Activated CD4-positive, alpha-beta memory T cell treated with anti-CD3 and anti-CD28 coated beads, Interleukin-2, amount 10 ng/mL, durations not matched to agents 7 days and 5 days (primary cell): ENCODE measurements at regions of chr10 and their contacts with region 1.

Region 1: GRCh38 chr10:96830511-96831199 is 1.4 kb upstream of the LCOR start:
- DNase-seq: peak; percentile 85
- H3K4me3 Mint-ChIP-seq: peak overlapping the region; percentile 66
- H3K27ac Mint-ChIP-seq: peak overlapping the region; percentile 81
- H3K4me1 Mint-ChIP-seq: peaks cover 38% of the 10 kb centered on the region
- H3K27me3 Mint-ChIP-seq: no peaks in the 10 kb centered on the region

Region 2: DNA sequence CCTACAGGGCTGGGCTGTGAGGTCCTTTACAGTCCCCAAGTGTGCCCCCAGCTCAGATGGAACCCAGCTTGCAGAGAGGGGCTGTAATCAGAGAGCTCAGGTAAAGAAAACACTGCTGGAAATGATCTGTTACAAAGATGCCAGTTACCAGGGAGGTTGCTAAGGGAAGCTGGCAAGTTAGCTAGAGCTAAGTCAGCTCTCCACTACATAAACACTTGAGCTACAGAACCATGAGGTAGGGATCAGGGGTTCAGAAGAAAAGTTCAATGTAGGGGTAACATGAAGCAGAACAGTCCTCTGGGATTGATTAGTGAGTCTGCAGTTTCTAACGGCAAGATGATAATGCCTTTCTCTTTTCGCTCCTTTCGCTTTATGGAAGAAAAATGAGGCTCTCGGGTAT is 190.8 kb before region 1 on chr10:
- CTCF ChIA-PET with region 1: interaction called, 12 read pairs
- POLR2A ChIA-PET with region 1: interaction called, 5 read pairs
- DNase-seq: no peak
- H3K4me3 Mint-ChIP-seq: no peak overlapping the region
- H3K27ac Mint-ChIP-seq: no peak overlapping the region
- H3K4me1 Mint-ChIP-seq: peaks cover 2% of the 10 kb centered on the region
- H3K27me3 Mint-ChIP-seq: no peaks in the 10 kb centered on the region

Region 3: DNA sequence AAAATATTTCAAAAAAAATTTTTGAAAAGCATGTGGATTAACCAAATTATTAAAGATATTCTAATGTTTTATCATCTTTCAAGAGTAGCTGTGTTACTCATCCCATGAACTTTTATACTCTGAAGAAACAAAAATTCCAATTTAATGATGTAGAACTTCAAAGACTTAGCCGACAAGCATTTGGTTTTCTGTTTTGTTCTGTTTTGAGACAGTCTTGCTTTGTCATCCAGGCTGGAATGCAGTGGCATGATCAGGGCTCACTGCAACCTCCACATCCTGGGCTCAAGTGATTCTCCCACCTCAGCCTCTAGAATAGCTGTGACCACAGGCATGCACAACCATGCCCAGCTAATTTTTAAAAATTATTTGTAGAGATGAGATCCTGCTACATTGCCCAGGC is 16.4 kb before region 1 on chr10:
- CTCF ChIA-PET with region 1: no interaction called
- POLR2A ChIA-PET with region 1: no interaction called
- DNase-seq: no peak
- H3K4me3 Mint-ChIP-seq: no peak overlapping the region
- H3K27ac Mint-ChIP-seq: no peak overlapping the region
- H3K4me1 Mint-ChIP-seq: no peaks in the 10 kb centered on the region
- H3K27me3 Mint-ChIP-seq: peaks cover 12% of the 10 kb centered on the region